WTC11 (cell line): ENCODE measurements at regions of chr17 and their contacts with region 1.

Region 1: DNA sequence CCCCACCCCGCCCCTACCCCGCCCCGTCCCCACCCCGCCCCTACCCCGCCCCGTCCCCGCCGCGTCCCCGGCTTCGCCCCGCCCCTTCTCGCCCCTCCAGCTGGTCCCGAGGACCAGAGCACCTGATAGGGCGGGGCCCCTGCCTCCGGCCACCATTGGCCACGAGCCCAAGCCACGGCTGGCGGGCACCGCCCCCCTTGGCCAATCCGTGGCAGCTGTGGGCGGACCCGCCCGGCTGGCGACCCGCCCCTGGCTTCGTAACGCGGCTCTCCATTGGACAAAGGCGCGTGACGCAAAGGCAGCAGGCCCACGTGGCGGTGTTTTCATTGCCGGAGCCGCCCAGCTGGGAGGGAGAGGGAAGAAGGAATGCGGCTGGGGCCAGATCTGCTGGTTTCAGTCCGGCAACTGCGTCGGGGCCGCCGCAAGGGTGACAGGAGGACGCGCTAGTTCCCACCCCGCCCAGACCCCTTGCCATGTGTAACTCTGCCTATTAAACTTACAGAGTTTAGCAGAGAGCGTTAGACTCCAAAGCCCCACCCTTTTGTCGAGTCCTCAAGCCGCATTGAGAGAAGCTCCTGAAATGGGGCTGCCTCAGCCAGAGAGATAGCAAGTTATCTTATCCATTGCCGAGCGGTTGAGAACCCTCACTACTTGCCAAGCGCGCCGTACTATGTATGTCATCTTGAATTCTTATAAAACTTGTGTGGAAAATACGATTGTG is 403 bp upstream of the WIPI1 start:
- DNase-seq: peak; percentile 99
- ATAC-seq: peak; percentile 91
- H3K4me3 Mint-ChIP-seq: peak overlapping the region; percentile 78
- H3K27ac Mint-ChIP-seq: peak overlapping the region; percentile 87
- H3K4me1 Mint-ChIP-seq: peaks cover 66% of the 10 kb centered on the region
- H3K27me3 Mint-ChIP-seq: peaks cover 7% of the 10 kb centered on the region; the same call in 1 of the 2 replicates
- CTCF ChIP-seq: no peak

Region 2: GRCh38 chr17:68344701-68345136 is 113.0 kb before region 1 on chr17:
- CTCF ChIA-PET with region 1: no interaction called
- POLR2A ChIA-PET with region 1: no interaction called
- DNase-seq: no peak
- ATAC-seq: peak; percentile 51
- H3K4me3 Mint-ChIP-seq: no peak overlapping the region
- H3K27ac Mint-ChIP-seq: no peak overlapping the region
- H3K4me1 Mint-ChIP-seq: peaks cover 5% of the 10 kb centered on the region
- H3K27me3 Mint-ChIP-seq: no peaks in the 10 kb centered on the region
- CTCF ChIP-seq: no peak

Region 3: GRCh38 chr17:68377862-68378770 is 79.6 kb before region 1 on chr17:
- CTCF ChIA-PET with region 1: no interaction called
- POLR2A ChIA-PET with region 1: no interaction called
- DNase-seq: peak; percentile 40
- ATAC-seq: peak; percentile 74
- H3K4me3 Mint-ChIP-seq: peak overlapping the region; percentile 30
- H3K27ac Mint-ChIP-seq: peak overlapping the region; percentile 94
- H3K4me1 Mint-ChIP-seq: peaks cover 29% of the 10 kb centered on the region
- H3K27me3 Mint-ChIP-seq: no peaks in the 10 kb centered on the region
- CTCF ChIP-seq: no peak

Region 4: DNA sequence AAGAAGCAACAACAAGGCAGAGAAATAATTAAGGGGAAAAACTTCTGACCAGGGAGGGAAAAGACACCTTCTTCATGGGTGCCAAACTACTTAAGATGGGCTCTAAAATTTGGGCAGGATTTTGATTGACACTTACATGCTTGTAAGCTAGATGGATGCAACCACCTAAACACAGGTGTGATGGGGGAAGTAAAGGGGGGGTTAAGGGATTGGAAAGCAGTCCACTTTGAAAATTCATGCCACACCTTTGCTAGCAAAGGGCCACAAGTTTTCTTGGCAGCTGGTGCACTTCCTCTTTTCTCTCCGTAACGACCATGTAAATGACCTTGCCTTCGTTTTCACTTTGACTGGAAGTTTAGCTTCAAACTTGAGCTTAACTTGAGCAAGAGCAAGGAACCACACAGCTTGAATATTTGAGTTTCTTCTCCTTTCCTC is 40.2 kb after region 1 on chr17:
- CTCF ChIA-PET with region 1: no interaction called
- POLR2A ChIA-PET with region 1: no interaction called
- DNase-seq: no peak
- ATAC-seq: no peak
- H3K4me3 Mint-ChIP-seq: no peak overlapping the region
- H3K27ac Mint-ChIP-seq: no peak overlapping the region
- H3K4me1 Mint-ChIP-seq: 0 out of 2 replicates have a peak, but pooled peaks cover 2% of the 10 kb centered on the region
- H3K27me3 Mint-ChIP-seq: no peaks in the 10 kb centered on the region; the same call in none of the 2 replicates
- CTCF ChIP-seq: no peak

Region 5: GRCh38 chr17:68512247-68512982 is 54.7 kb after region 1 on chr17 and contains the start of gene PRKAR1A:
- CTCF ChIA-PET with region 1: interaction called, 3 read pairs
- POLR2A ChIA-PET with region 1: interaction called, 14 read pairs
- DNase-seq: peak; percentile 91
- ATAC-seq: peak; percentile 84
- H3K4me3 Mint-ChIP-seq: peak within 1 kb of the TSS; percentile 98
- H3K27ac Mint-ChIP-seq: peak within 1 kb of the TSS; percentile 98
- H3K4me1 Mint-ChIP-seq: peaks cover 36% of the 10 kb centered on the region
- H3K27me3 Mint-ChIP-seq: no peaks in the 10 kb centered on the region; the same call in 1 of the 2 replicates
- CTCF ChIP-seq: no peak
- total RNA-seq, gene PRKAR1A: 149 to 158 TPM (median 155 TPM) in 3 replicates